Breast epithelium (tissue), 4 donors: ENCODE measurements at regions of chr14 and their contacts with region 1.

Region 1: DNA sequence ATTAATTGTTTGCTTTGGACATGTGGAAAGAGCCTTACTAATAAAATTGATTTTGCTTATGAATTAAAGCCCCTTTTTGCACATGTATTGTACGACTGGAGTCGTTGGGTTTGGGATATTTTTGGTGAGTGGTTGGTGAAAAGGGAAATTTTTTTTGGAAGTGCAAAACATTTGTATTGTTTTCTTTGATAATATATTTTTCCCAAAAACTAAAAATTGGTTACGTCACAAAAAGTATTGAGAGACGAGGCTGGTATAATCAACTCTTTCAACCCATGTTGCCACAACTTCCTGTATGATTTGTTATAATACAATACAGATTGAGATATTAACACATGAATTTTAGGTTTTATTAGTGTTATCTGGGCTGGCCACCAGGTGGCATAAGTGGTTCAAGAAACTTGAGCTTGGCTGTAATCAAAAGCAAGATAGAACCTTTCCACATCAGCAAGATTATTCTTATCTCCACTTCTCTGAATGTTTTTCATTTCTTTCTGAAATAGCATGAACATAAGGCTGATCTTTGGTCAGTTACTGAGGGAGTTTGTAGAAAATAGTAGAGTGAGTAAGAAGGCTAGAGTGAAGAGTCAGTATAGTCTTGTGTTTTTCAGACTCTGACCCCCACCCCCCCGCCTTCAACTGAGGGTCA is 8.7 kb downstream of the NGDN start:
- DNase-seq: no peak
- H3K4me3 ChIP-seq: no peak overlapping the region
- H3K27ac ChIP-seq: no peak overlapping the region
- H3K4me1 ChIP-seq: no peaks in the 10 kb centered on the region
- H3K27me3 ChIP-seq: no peaks in the 10 kb centered on the region
- CTCF ChIP-seq: peak; percentile 58 to 79 (median 72)
- POLR2A ChIP-seq: no peak

Region 2: DNA sequence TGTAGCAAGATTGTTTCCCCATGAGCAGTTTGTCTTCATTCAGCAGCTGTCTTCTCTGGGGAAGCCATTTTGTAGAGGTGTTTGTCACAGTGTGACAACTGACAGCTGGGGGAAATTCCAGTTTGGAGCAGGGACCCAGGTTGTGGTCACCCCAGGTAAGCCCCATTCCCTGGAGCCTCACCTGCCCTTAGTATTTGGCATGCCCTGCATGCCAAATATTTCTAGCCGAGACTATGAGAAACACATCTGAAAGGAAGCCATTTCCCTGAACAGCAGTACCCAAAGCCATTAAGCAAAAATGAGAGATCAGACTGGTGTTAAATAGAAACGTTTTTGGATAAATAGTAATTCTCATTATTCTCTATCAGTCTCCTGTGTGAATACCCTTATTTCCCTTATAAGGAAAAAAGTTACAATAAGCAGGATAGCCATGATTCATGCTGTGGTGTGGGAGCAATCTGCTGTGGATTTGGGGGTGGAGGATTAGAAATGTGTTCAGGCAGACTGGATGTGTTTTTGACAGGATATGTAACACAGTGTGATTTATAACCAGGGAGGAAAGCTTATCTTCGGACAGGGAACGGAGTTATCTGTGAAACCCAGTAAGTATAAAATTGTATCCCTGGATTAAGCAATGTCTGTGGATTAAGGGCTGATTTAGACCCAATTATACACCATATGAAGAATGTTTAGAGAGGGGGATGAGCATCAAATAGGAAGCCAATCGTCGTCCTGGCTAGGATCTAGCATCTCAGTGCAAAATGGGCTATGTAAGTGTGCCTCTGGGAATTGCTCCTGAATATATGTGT is 958.2 kb before region 1 on chr14:
- intact Hi-C with region 1: no loop called
- DNase-seq: no peak
- H3K4me3 ChIP-seq: no peak overlapping the region
- H3K27ac ChIP-seq: peak overlapping the region; percentile 54 to 64
- H3K4me1 ChIP-seq: peaks cover 0 to 9% of the 10 kb centered on the region in 2 donors
- H3K27me3 ChIP-seq: no peaks in the 10 kb centered on the region
- CTCF ChIP-seq: no peak
- POLR2A ChIP-seq: no peak

Region 3: DNA sequence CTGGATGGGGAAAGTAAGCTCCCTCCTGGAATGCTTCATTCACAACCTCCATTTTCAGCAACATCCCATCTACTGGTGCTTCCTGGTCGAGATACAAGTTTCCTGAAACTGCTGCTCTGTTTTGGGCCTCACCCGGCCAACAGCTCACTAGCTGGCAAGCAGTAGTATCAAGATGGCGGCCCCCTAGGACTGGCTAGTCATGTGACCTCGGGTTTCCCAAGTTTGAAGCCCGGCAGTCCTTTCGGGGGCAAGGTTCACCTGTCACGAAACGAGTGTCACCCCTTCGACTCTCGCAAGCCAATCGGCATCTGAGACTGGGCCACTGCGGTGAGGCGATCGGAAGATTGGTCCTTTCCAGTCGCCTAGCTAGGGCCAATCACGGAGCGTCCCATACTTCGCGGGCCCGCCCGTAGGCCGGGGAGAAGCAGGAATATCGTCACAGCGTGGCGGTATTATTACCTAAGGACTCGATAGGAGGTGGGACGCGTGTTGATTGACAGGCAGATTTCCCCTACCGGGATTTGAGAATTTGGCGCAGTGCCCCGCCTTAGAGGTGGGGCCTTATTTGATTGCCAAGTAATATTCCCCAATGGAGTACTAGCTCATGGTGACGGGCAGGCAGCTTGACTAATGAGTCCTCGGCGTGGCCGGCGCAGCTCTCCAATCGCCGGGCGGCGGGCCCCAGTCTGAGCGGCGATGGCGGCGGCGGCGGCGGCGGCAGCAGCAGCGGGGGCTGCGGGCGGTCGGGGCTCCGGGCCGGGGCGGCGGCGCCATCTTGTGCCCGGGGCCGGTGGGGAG is 157.3 kb before region 1 on chr14 and contains the start of gene PABPN1:
- intact Hi-C with region 1: loop called (anchors 10 kb)
- DNase-seq: peak; percentile 100
- H3K4me3 ChIP-seq: peak within 1 kb of the TSS; percentile 76 to 97 (median 92)
- H3K27ac ChIP-seq: peak within 1 kb of the TSS; percentile 94 to 97
- H3K4me1 ChIP-seq: peaks cover 0 to 4% of the 10 kb centered on the region in 2 donors
- H3K27me3 ChIP-seq: no peaks in the 10 kb centered on the region
- CTCF ChIP-seq: peak in 1 of 3 donors; percentile 16
- POLR2A ChIP-seq: peak; percentile 23
- total RNA-seq, gene PABPN1: 45.9 to 87.2 (median 74.1) TPM

Region 4: GRCh38 chr14:23562268-23563203 is 84.3 kb after region 1 on chr14:
- intact Hi-C with region 1: loop called (anchors 5 kb)
- DNase-seq: no peak
- H3K4me3 ChIP-seq: no peak overlapping the region
- H3K27ac ChIP-seq: peak overlapping the region; percentile 63 to 76
- H3K4me1 ChIP-seq: peaks cover 0 to 4% of the 10 kb centered on the region in 2 donors
- H3K27me3 ChIP-seq: no peaks in the 10 kb centered on the region
- CTCF ChIP-seq: peak; percentile 82 to 90 (median 86)
- POLR2A ChIP-seq: no peak